ENCODE measurements at regions of chr16 and their contacts with region 1.

Region 1: DNA sequence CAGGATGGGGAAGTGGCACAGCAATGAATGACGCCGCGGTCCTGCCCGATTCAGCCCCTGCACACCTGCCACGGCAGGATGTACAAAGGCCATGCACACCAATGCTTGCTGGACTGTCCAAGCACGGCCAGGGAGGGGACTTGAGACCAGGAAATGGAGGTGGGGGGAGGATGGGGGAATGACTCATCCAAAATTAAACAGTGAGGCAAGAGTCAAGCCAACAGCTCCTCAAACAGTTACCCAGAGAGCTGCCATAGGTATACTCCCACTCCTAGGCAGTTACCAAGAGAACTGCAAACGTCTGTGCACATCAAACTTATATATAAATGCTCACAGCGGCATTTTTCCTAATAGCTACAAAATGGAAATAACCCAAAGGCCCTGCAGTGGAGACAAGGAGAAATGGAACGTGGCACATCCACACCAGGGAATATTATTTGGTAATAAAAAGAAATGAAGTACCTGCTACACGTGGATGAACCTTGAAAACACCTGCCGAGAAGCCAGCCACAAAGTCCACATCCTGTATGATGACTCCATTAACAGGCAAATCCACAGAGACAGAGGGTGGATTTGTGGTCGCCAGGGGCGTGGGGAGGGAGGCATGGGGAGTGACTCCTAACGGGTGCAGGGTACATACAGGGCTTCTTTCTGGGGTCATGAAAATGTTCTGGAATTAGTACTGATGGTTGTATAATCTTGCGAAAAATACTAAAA is 54.1 kb downstream of the VAC14 start:
- DNase-seq: peak; percentile 75 to 90
- ATAC-seq: peak; percentile 80

Region 2: GRCh38 chr16:70685938-70686375 is 60.9 kb before region 1 on chr16 and contains the start of gene MTSS2:
- intact Hi-C with region 1: loop called in 1 of 2 experiments (anchors 10 kb)
- DNase-seq: peak; percentile 76 to 78
- ATAC-seq: peak; percentile 44
- total RNA-seq, gene MTSS2: 21.5 to 28.3 TPM